ENCODE measurements at regions of chr20 and their contacts with region 1.

Region 1: GRCh38 chr20:32277361-32278198 is at the start of gene KIF3B:
- DNase-seq: peak; percentile 78
- H3K4me3 ChIP-seq: peak within 1 kb of the TSS; percentile 56 to 100 (median 96)
- H3K27ac ChIP-seq: peak within 1 kb of the TSS; percentile 34
- H3K4me1 ChIP-seq: peaks cover 12% of the 10 kb centered on the region
- H3K27me3 ChIP-seq: no peaks in the 10 kb centered on the region
- CTCF ChIP-seq: no peak
- total RNA-seq, gene KIF3B: 24.2 to 25.5 TPM

Region 2: DNA sequence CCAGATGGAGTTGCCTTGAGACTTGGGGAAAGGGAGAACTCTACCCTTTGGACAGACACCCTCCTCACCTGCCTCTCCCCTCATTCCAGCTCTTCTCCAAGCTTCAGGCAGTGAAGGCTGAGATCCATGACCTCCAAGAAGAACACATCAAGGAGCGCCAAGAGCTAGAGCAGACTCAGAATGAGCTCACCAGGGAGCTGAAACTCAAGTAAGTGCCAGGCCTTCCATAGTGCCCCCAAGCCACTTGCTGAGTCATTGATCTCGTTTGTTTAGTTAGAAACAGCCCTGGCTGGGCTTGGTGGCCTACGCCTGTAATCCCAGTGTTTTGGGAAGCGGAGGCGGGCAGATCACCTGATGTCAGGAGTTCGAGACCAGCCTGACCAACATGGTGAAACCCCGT is 39.1 kb after region 1 on chr20:
- CTCF ChIA-PET with region 1: no interaction called
- dilution Hi-C with region 1: loop called (anchors 5 kb)
- in situ Hi-C with region 1: no loop called
- intact Hi-C with region 1: no loop called
- DNase-seq: peak; percentile 22
- H3K4me3 ChIP-seq: no peak overlapping the region
- H3K27ac ChIP-seq: no peak overlapping the region
- H3K4me1 ChIP-seq: no peaks in the 10 kb centered on the region
- H3K27me3 ChIP-seq: no peaks in the 10 kb centered on the region
- CTCF ChIP-seq: no peak

Region 3: GRCh38 chr20:32357869-32358631 is 80.5 kb after region 1 on chr20 and contains the start of gene ASXL1:
- CTCF ChIA-PET with region 1: no interaction called
- dilution Hi-C with region 1: no loop called
- in situ Hi-C with region 1: no loop called
- intact Hi-C with region 1: no loop called
- DNase-seq: peak; percentile 91
- H3K4me3 ChIP-seq: peak within 1 kb of the TSS; percentile 61 to 70 (median 64)
- H3K27ac ChIP-seq: peak within 1 kb of the TSS; percentile 76
- H3K4me1 ChIP-seq: peaks cover 38% of the 10 kb centered on the region
- H3K27me3 ChIP-seq: no peaks in the 10 kb centered on the region
- CTCF ChIP-seq: no peak
- total RNA-seq, gene ASXL1: 37.2 to 60.1 TPM

Measured in mammary epithelial cell (primary cell).